CD4-positive, alpha-beta T cell (primary cell): ENCODE measurements at regions of chr3 and their contacts with region 1.

Region 1: GRCh38 chr3:132722164-132723024 is at the start of gene NPHP3:
- DNase-seq: peak; percentile 90 to 100 (median 98)
- ATAC-seq: peak; percentile 77
- H3K4me3 ChIP-seq: peak within 1 kb of the TSS; percentile 89
- H3K4me3 Mint-ChIP-seq: peak within 1 kb of the TSS; percentile 96
- H3K27ac ChIP-seq: peak within 1 kb of the TSS; percentile 43 to 46
- H3K27ac Mint-ChIP-seq: peak within 1 kb of the TSS; percentile 93
- H3K4me1 ChIP-seq: peaks cover 25% of the 10 kb centered on the region
- H3K4me1 Mint-ChIP-seq: peaks cover 50% of the 10 kb centered on the region
- H3K27me3 ChIP-seq: no peaks in the 10 kb centered on the region
- H3K27me3 Mint-ChIP-seq: no peaks in the 10 kb centered on the region
- CTCF ChIP-seq: no peak
- total RNA-seq, gene NPHP3: 25.5 to 27.4 TPM

Region 2: DNA sequence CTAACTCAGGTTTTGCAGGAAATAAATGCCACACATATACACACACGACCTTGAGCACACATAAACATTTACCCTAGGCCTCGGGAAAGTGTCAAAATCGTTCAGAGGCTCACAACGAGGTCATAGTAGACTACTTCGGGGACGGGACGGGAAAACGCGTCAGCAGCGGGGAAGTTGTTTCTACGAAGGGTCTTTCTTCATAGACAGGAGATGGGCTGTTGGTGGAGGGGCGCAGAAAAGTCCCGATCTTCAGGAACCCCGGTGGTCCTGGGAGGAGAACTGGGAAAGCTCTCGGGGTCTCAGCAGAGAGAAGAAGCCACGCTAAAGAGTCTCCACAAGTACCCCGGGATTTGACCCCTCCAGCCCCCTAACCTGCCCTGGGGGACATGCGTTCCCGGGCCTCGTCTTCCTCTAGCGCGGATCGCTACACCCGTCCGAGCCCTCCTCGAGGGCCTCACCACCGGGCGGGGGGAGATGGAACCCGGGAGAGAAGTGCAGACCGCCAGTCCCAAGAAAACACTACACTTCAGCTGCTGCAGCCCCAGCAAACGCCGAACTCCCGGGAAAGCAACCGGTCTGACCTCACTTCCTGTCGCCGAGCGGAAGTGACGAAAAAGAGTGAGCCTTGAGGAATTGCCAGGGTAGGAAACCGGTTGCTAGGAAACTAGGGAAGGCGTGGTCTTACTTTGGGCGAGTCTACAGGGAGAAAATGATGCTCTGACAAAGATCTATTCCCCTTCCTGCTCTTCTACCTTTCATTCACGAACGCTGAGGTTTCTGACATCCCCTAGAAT is 1976.0 kb before region 1 on chr3 and contains the start of gene PIK3R4:
- CTCF ChIA-PET with region 1: interaction called, 3 read pairs
- POLR2A ChIA-PET with region 1: no interaction called
- intact Hi-C with region 1: loop called in 1 of 2 experiments (anchors 5 kb)
- DNase-seq: peak; percentile 84 to 99 (median 90)
- ATAC-seq: peak; percentile 81
- H3K4me3 ChIP-seq: peak within 1 kb of the TSS; percentile 90
- H3K4me3 Mint-ChIP-seq: peak within 1 kb of the TSS; percentile 90
- H3K27ac ChIP-seq: peak within 1 kb of the TSS; percentile 81 to 95
- H3K27ac Mint-ChIP-seq: peak within 1 kb of the TSS; percentile 93
- H3K4me1 ChIP-seq: peaks cover 31% of the 10 kb centered on the region
- H3K4me1 Mint-ChIP-seq: peaks cover 58% of the 10 kb centered on the region
- H3K27me3 ChIP-seq: no peaks in the 10 kb centered on the region
- H3K27me3 Mint-ChIP-seq: no peaks in the 10 kb centered on the region
- CTCF ChIP-seq: no peak
- total RNA-seq, gene PIK3R4: 13.7 to 14.5 TPM

Region 3: GRCh38 chr3:132464066-132464465 is 258.3 kb before region 1 on chr3:
- CTCF ChIA-PET with region 1: no interaction called
- POLR2A ChIA-PET with region 1: no interaction called
- intact Hi-C with region 1: no loop called
- DNase-seq: no peak
- ATAC-seq: no peak
- H3K4me3 ChIP-seq: no peak overlapping the region
- H3K4me3 Mint-ChIP-seq: no peak overlapping the region
- H3K27ac ChIP-seq: no peak overlapping the region
- H3K27ac Mint-ChIP-seq: no peak overlapping the region
- H3K4me1 ChIP-seq: no peaks in the 10 kb centered on the region
- H3K4me1 Mint-ChIP-seq: no peaks in the 10 kb centered on the region
- H3K27me3 ChIP-seq: no peaks in the 10 kb centered on the region
- H3K27me3 Mint-ChIP-seq: no peaks in the 10 kb centered on the region
- CTCF ChIP-seq: no peak

Region 4: GRCh38 chr3:132788301-132788671 is 65.9 kb after region 1 on chr3:
- CTCF ChIA-PET with region 1: no interaction called
- POLR2A ChIA-PET with region 1: no interaction called
- intact Hi-C with region 1: no loop called
- DNase-seq: no peak
- ATAC-seq: no peak
- H3K4me3 ChIP-seq: no peak overlapping the region
- H3K4me3 Mint-ChIP-seq: no peak overlapping the region
- H3K27ac ChIP-seq: no peak overlapping the region
- H3K27ac Mint-ChIP-seq: no peak overlapping the region
- H3K4me1 ChIP-seq: no peaks in the 10 kb centered on the region
- H3K4me1 Mint-ChIP-seq: no peaks in the 10 kb centered on the region
- H3K27me3 ChIP-seq: peaks cover 2 to 3% of the 10 kb centered on the region in 2 experiments
- H3K27me3 Mint-ChIP-seq: peaks cover 46% of the 10 kb centered on the region
- CTCF ChIP-seq: no peak

Region 5: GRCh38 chr3:133426721-133427120 is 704.3 kb after region 1 on chr3:
- CTCF ChIA-PET with region 1: interaction called, 7 read pairs
- POLR2A ChIA-PET with region 1: interaction called, 3 read pairs
- intact Hi-C with region 1: loop called in 1 of 2 experiments (anchors 1 kb)
- DNase-seq: no peak
- ATAC-seq: no peak
- H3K4me3 ChIP-seq: no peak overlapping the region
- H3K4me3 Mint-ChIP-seq: no peak overlapping the region
- H3K27ac ChIP-seq: no peak overlapping the region
- H3K27ac Mint-ChIP-seq: no peak overlapping the region
- H3K4me1 ChIP-seq: peaks cover 6% of the 10 kb centered on the region
- H3K4me1 Mint-ChIP-seq: no peaks in the 10 kb centered on the region
- H3K27me3 ChIP-seq: no peaks in the 10 kb centered on the region
- H3K27me3 Mint-ChIP-seq: peaks cover 9% of the 10 kb centered on the region
- CTCF ChIP-seq: no peak

Region 6: DNA sequence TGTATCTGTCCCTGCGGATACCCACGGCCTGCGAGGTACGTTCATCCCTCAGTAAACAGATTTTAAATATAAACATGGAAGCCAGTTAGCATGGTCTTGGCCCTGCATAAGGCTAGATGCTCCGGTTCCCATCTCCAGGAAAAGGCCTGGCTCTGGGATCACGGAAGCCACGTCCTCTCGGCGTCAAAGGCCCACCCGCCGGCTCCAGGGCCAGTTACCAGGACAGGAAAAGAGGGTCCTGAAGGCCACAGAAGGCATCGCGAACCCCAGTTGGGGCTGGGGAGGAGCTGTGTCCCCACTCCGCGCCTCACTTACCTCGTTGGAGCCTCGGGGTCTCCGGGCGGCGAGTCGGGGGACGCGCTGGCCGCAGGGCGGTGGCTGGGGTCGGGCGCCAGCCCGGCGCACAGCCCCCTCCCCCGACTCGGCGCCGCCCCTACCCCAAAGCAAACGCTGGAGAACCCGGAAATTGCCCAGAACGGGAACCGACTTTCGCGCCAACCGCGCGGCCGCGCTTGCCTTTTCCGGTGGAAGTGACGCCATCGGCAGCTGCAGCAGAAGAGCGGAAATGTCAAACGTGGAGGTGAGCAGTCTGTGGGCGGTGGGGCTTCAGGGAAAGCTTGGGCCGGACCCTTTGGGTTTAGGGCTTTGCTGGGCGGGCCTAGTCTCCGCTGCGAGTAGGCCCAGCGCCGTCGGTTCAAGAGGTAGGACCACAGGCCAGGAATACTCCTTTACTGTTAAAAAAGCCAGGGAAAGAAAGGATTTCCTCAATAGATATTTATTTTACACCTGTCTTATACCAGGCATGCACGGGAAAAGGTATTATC is 939.3 kb after region 1 on chr3 and contains the start of gene TOPBP1:
- CTCF ChIA-PET with region 1: no interaction called
- POLR2A ChIA-PET with region 1: interaction called, 4 read pairs
- intact Hi-C with region 1: loop called (anchors 5 to 10 kb)
- DNase-seq: peak; percentile 70 to 92 (median 81)
- ATAC-seq: peak; percentile 85
- H3K4me3 ChIP-seq: peak within 1 kb of the TSS; percentile 72
- H3K4me3 Mint-ChIP-seq: peak within 1 kb of the TSS; percentile 97
- H3K27ac ChIP-seq: peak within 1 kb of the TSS; percentile 58 to 73
- H3K27ac Mint-ChIP-seq: peak within 1 kb of the TSS; percentile 95
- H3K4me1 ChIP-seq: peaks cover 26% of the 10 kb centered on the region
- H3K4me1 Mint-ChIP-seq: peaks cover 45% of the 10 kb centered on the region
- H3K27me3 ChIP-seq: no peaks in the 10 kb centered on the region
- H3K27me3 Mint-ChIP-seq: no peaks in the 10 kb centered on the region
- CTCF ChIP-seq: no peak
- total RNA-seq, gene TOPBP1: 29.1 to 32.4 TPM

Region 7: DNA sequence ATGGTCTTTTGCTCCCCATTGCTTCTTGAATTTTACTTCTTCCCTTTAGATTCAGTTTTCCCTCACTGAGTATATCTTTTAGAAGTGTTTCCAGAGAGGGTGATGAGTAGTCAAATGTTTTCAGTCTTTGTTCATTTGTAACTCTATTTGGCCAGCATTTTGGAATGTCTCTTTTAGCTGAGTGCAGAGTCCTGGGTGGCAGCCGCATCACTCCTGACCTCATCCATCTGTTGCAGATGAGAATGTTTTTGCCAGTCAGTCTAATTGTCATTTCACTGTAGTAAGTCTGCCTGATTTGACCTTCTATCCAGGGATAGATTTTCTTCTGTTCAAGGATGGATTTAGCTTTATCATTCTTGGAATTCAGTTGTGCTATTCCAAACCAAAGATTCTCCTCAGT is 1090.5 kb after region 1 on chr3:
- CTCF ChIA-PET with region 1: no interaction called
- POLR2A ChIA-PET with region 1: no interaction called
- intact Hi-C with region 1: loop called in 1 of 2 experiments (anchors 5 kb)
- DNase-seq: no peak
- ATAC-seq: no peak
- H3K4me3 ChIP-seq: no peak overlapping the region
- H3K4me3 Mint-ChIP-seq: no peak overlapping the region
- H3K27ac ChIP-seq: no peak overlapping the region
- H3K27ac Mint-ChIP-seq: no peak overlapping the region
- H3K4me1 ChIP-seq: no peaks in the 10 kb centered on the region
- H3K4me1 Mint-ChIP-seq: peaks cover 39% of the 10 kb centered on the region
- H3K27me3 ChIP-seq: no peaks in the 10 kb centered on the region
- H3K27me3 Mint-ChIP-seq: no peaks in the 10 kb centered on the region
- CTCF ChIP-seq: no peak

Region 8: DNA sequence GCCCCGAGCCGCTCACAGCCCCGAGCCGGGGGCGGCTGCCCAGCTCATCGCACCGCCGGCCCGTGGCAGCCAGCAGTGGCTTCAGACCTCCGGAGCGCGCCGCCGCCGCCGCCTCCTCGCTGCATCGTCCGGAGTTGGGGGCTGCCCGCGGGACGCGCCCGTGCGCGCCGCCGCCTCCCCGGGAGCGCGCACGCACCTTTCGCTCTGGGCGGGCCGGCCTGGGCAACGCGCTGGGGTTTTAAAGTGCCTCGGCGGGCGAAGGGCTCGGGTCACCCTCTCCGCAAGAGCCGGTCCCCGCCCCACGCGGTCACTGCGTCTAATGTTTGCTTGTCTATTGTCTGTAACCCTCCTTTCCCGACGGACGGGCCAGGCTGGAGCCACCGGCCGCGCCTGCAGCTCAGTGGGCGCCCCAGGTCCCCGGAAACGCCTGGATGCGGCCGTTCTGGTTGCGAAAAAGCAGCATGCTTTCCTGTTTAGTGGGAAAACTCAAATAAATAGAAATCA is 1528.4 kb after region 1 on chr3 and contains the start of gene RYK:
- CTCF ChIA-PET with region 1: no interaction called
- POLR2A ChIA-PET with region 1: no interaction called
- intact Hi-C with region 1: loop called in 1 of 2 experiments (anchors 5 kb)
- DNase-seq: peak; percentile 38 to 90 (median 67)
- ATAC-seq: peak; percentile 63
- H3K4me3 ChIP-seq: peak within 1 kb of the TSS; percentile 87
- H3K4me3 Mint-ChIP-seq: peak within 1 kb of the TSS; percentile 98
- H3K27ac ChIP-seq: peak within 1 kb of the TSS; percentile 58 to 77
- H3K27ac Mint-ChIP-seq: peak within 1 kb of the TSS; percentile 96
- H3K4me1 ChIP-seq: peaks cover 15% of the 10 kb centered on the region
- H3K4me1 Mint-ChIP-seq: peaks cover 61% of the 10 kb centered on the region
- H3K27me3 ChIP-seq: no peaks in the 10 kb centered on the region
- H3K27me3 Mint-ChIP-seq: no peaks in the 10 kb centered on the region
- CTCF ChIP-seq: no peak
- total RNA-seq, gene RYK: 57.6 to 59.2 TPM